ENCODE measurements at regions of chr1 and their contacts with region 1.

Region 1: GRCh38 chr1:231757101-231757404 is 130.5 kb downstream of the DISC1 start:
- DNase-seq: no peak
- H3K4me3 Mint-ChIP-seq: no peak overlapping the region
- H3K27ac Mint-ChIP-seq: no peak overlapping the region
- H3K4me1 Mint-ChIP-seq: no peaks in the 10 kb centered on the region
- H3K27me3 Mint-ChIP-seq: no peaks in the 10 kb centered on the region

Region 2: GRCh38 chr1:231806623-231807495 is 49.8 kb after region 1 on chr1:
- intact Hi-C with region 1: loop called (anchors 2 kb)
- DNase-seq: peak; percentile 7
- H3K4me3 Mint-ChIP-seq: no peak overlapping the region
- H3K27ac Mint-ChIP-seq: no peak overlapping the region
- H3K4me1 Mint-ChIP-seq: no peaks in the 10 kb centered on the region
- H3K27me3 Mint-ChIP-seq: no peaks in the 10 kb centered on the region

Region 3: DNA sequence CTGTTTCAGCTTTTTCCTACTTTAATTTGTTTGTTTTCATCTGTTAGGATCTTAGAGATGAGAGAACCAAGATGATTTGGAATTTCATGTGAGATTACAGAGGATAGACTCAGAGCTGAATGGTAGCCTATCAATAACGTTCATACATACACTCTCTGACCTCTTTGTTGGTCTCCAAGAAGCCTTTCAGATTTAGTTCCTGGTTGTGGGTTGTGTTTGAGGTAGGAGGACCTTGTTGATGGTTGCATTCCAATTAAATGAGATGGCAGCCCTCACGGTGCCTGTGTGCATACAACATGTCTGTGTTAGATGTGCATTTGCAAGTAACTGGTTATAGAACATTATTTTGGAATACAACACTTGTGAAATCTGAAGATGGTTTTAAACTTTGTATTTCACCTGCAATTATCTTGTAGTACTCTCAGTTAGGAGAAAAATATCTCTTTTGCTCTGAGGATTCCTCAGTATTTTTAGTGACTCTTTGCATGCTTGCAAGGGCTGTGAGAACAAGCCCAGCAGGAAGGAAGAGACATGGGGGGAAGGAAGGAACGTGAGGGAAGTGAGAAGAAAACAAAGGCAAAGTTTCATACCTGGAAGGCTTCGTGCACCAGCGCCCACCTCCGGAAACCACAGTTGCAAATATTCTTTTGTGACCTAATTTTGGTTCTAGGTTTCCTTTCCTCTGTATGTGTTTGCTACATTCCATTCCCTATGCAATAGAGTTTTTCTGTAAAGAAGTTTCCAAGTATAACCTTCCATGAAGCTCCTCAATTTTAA is 161.4 kb after region 1 on chr1:
- intact Hi-C with region 1: no loop called
- DNase-seq: peak; percentile 8
- H3K4me3 Mint-ChIP-seq: peak overlapping the region; percentile 48
- H3K27ac Mint-ChIP-seq: no peak overlapping the region
- H3K4me1 Mint-ChIP-seq: peaks cover 53% of the 10 kb centered on the region
- H3K27me3 Mint-ChIP-seq: peaks cover 22% of the 10 kb centered on the region

Measured in activated T-helper 1 cell treated with anti-CD3 and anti-CD28 coated beads, Interleukin-12 subunit alpha, Interleukin-12 subunit beta, Interleukin-2, Interleukin-4 antibody, amounts not matched to agents 30 ng/mL and 10 ng/mL and 1 ng/mL, durations not matched to agents 14 hours and 24 hours and 36 hours (primary cell).